MCF 10A (cell line): ENCODE measurements at regions of chr18 and their contacts with region 1.

Region 1: GRCh38 chr18:56702946-56703345 is 51.8 kb downstream of the WDR7 start:
- DNase-seq: peak; percentile 59
- H3K4me3 Mint-ChIP-seq: no peak overlapping the region
- H3K27ac Mint-ChIP-seq: no peak overlapping the region
- H3K4me1 Mint-ChIP-seq: no peaks in the 10 kb centered on the region
- H3K27me3 Mint-ChIP-seq: no peaks in the 10 kb centered on the region
- CTCF ChIP-seq: peak; percentile 31

Region 2: GRCh38 chr18:55559739-55560138 is 1143.2 kb before region 1 on chr18:
- CTCF ChIA-PET with region 1: no interaction called
- POLR2A ChIA-PET with region 1: no interaction called
- intact Hi-C with region 1: no loop called
- DNase-seq: no peak
- H3K4me3 Mint-ChIP-seq: no peak overlapping the region
- H3K27ac Mint-ChIP-seq: no peak overlapping the region
- H3K4me1 Mint-ChIP-seq: no peaks in the 10 kb centered on the region
- H3K27me3 Mint-ChIP-seq: no peaks in the 10 kb centered on the region
- CTCF ChIP-seq: no peak

Region 3: GRCh38 chr18:56691530-56691929 is 11.4 kb before region 1 on chr18:
- CTCF ChIA-PET with region 1: interaction called, 15 read pairs
- POLR2A ChIA-PET with region 1: no interaction called
- intact Hi-C with region 1: no loop called
- DNase-seq: no peak
- H3K4me3 Mint-ChIP-seq: no peak overlapping the region
- H3K27ac Mint-ChIP-seq: no peak overlapping the region
- H3K4me1 Mint-ChIP-seq: no peaks in the 10 kb centered on the region
- H3K27me3 Mint-ChIP-seq: no peaks in the 10 kb centered on the region
- CTCF ChIP-seq: no peak